Caco-2 (cell line): ENCODE measurements at regions of chr2 and their contacts with region 1.

Region 1: GRCh38 chr2:239106314-239106908 is 258.5 kb downstream of the TWIST2 start:
- DNase-seq: peak; percentile 39 to 51
- H3K4me3 ChIP-seq: no peak overlapping the region
- H3K4me3 Mint-ChIP-seq: no peak overlapping the region
- H3K27ac Mint-ChIP-seq: no peak overlapping the region
- H3K4me1 ChIP-seq: no peaks in the 10 kb centered on the region
- H3K4me1 Mint-ChIP-seq: no peaks in the 10 kb centered on the region
- H3K27me3 ChIP-seq: no peaks in the 10 kb centered on the region
- H3K27me3 Mint-ChIP-seq: no peaks in the 10 kb centered on the region
- CTCF ChIP-seq: peak; percentile 29 to 45

Region 2: GRCh38 chr2:239035361-239036078 is 70.9 kb before region 1 on chr2:
- CTCF ChIA-PET with region 1: no interaction called
- POLR2A ChIA-PET with region 1: no interaction called
- intact Hi-C with region 1: loop called (anchors 1 kb)
- DNase-seq: peak in 1 of 2 experiments; percentile 61
- H3K4me3 ChIP-seq: no peak overlapping the region
- H3K4me3 Mint-ChIP-seq: no peak overlapping the region
- H3K27ac Mint-ChIP-seq: no peak overlapping the region
- H3K4me1 ChIP-seq: no peaks in the 10 kb centered on the region
- H3K4me1 Mint-ChIP-seq: no peaks in the 10 kb centered on the region
- H3K27me3 ChIP-seq: no peaks in the 10 kb centered on the region
- H3K27me3 Mint-ChIP-seq: peaks cover 9% of the 10 kb centered on the region
- CTCF ChIP-seq: peak; percentile 59 to 67

Region 3: DNA sequence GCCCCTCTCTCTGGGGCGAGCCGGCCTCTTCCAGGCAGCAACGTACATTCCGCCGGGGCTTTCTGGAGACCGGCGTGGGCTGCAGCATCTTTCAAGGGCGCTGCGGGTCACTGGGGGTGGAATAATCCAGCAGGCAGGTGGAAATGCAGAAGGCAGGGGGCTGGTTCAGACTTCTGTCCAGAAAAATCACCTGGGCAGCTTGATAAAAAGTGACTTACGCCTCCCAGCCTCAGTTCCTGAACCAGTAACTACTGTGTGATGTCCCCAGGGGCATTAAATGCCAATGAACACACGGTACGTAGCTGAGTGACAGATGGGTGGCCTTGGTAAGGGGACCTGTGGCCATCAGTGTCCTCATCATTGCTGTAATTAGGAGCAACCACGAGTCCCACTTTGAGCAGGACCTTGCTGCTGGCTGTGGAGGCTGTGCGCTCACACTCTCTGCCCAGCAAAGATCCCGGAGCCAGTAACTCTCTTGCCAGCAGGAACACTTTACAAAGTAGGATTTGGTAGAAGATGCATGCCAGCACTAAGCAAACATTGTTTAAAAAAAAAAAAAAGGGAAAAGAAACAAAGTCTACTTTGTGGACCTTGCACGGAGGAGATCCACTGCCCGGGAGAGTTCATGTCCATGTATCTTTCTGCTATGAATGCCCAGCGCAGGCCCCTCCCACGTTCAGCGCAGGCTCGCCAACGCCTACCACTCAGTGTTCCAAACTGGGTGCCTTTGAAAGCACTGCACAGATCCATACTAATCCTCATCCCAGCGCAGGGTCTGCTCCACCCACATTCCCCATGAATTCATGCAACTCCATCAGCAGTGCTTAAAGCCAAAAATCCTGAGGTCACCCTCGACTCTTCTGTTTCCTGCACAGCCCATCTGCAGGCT is 117.1 kb after region 1 on chr2:
- CTCF ChIA-PET with region 1: no interaction called
- POLR2A ChIA-PET with region 1: no interaction called
- intact Hi-C with region 1: no loop called
- DNase-seq: no peak
- H3K4me3 ChIP-seq: no peak overlapping the region
- H3K4me3 Mint-ChIP-seq: no peak overlapping the region
- H3K27ac Mint-ChIP-seq: no peak overlapping the region
- H3K4me1 ChIP-seq: no peaks in the 10 kb centered on the region
- H3K4me1 Mint-ChIP-seq: peaks cover 18% of the 10 kb centered on the region
- H3K27me3 ChIP-seq: no peaks in the 10 kb centered on the region
- H3K27me3 Mint-ChIP-seq: no peaks in the 10 kb centered on the region
- CTCF ChIP-seq: no peak